BJ (cell line): ENCODE measurements at regions of chr20 and their contacts with region 1.

Region 1: GRCh38 chr20:18739751-18740166 is 73.8 kb upstream of the SCP2D1 start:
- DNase-seq: peak; percentile 90
- H3K4me3 ChIP-seq: no peak overlapping the region
- H3K27me3 ChIP-seq: no peaks in the 10 kb centered on the region
- CTCF ChIP-seq: no peak

Region 2: GRCh38 chr20:18750735-18751134 is 11.0 kb after region 1 on chr20:
- CTCF ChIA-PET with region 1: interaction called, 14 read pairs
- POLR2A ChIA-PET with region 1: no interaction called
- DNase-seq: no peak
- H3K4me3 ChIP-seq: no peak overlapping the region
- H3K27me3 ChIP-seq: no peaks in the 10 kb centered on the region
- CTCF ChIP-seq: no peak